ENCODE measurements at regions of chr3 and their contacts with region 1.

Region 1: GRCh38 chr3:138608322-138609135 is at the start of gene FAIM:
- DNase-seq: peak; percentile 85
- ATAC-seq: peak; percentile 74
- H3K4me3 ChIP-seq: peak within 1 kb of the TSS; percentile 57 to 83 (median 71)
- H3K4me3 Mint-ChIP-seq: peak within 1 kb of the TSS; percentile 87
- H3K27ac ChIP-seq: peak within 1 kb of the TSS; percentile 60 to 84
- H3K27ac Mint-ChIP-seq: peak within 1 kb of the TSS; percentile 93
- H3K4me1 ChIP-seq: peaks cover 12 to 14% of the 10 kb centered on the region in 2 donors
- H3K4me1 Mint-ChIP-seq: peaks cover 15% of the 10 kb centered on the region
- H3K27me3 ChIP-seq: no peaks in the 10 kb centered on the region
- H3K27me3 Mint-ChIP-seq: no peaks in the 10 kb centered on the region
- CTCF ChIP-seq: no peak
- total RNA-seq, gene FAIM: 13.8 and 16.3 TPM in 2 replicates

Region 2: DNA sequence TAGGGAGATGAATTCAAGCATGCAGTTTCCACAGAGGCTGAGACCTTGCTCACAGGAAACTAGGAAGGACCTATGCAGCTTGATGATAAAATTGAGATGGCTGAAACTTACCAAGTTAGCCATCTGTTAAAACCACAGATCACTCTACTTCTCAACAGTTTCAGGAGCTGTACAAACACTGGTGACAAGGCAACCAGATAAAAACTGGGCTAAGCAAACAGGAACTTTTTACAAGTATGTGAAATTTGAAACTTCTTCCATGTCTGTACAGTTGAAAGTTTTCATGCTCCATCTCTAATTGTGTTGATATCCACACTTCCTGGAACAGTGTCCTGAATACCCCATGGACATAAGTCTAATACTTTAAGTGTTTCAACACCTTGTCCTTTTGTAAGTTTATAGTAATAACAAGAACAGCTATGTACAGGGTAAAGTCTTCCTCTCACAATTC is 78.3 kb after region 1 on chr3:
- CTCF ChIA-PET with region 1: no interaction called
- POLR2A ChIA-PET with region 1: no interaction called
- intact Hi-C with region 1: loop called (anchors 10 kb)
- DNase-seq: peak; percentile 17
- ATAC-seq: peak; percentile 28
- H3K4me3 ChIP-seq: no peak overlapping the region
- H3K4me3 Mint-ChIP-seq: peak overlapping the region; percentile 50
- H3K27ac ChIP-seq: no peak overlapping the region
- H3K27ac Mint-ChIP-seq: no peak overlapping the region
- H3K4me1 ChIP-seq: peaks cover 19 to 23% of the 10 kb centered on the region in 2 donors
- H3K4me1 Mint-ChIP-seq: peaks cover 23% of the 10 kb centered on the region
- H3K27me3 ChIP-seq: no peaks in the 10 kb centered on the region
- H3K27me3 Mint-ChIP-seq: no peaks in the 10 kb centered on the region
- CTCF ChIP-seq: no peak

Region 3: DNA sequence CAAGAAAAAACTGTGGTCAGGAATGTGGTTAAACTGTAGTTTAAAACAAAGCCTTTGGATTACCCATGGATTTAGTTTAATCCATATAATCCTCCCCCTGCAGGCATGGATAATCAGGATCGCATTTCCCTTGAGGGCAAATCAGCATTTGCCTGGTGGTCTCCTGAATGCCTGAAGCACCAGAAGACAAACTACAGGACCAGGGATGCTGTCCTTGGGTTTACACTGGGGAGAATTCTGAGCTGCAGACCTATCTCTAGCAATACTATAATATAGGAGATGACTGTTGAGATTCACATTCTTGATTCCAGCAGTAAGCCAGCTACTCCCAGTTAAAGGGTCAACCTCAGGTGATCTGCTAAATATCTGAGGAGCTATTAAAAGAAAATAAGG is 215.6 kb after region 1 on chr3:
- CTCF ChIA-PET with region 1: no interaction called
- POLR2A ChIA-PET with region 1: no interaction called
- intact Hi-C with region 1: no loop called
- DNase-seq: no peak
- ATAC-seq: no peak
- H3K4me3 ChIP-seq: no peak overlapping the region
- H3K4me3 Mint-ChIP-seq: no peak overlapping the region
- H3K27ac ChIP-seq: no peak overlapping the region
- H3K27ac Mint-ChIP-seq: no peak overlapping the region
- H3K4me1 ChIP-seq: no peaks in the 10 kb centered on the region
- H3K4me1 Mint-ChIP-seq: no peaks in the 10 kb centered on the region
- H3K27me3 ChIP-seq: no peaks in the 10 kb centered on the region
- H3K27me3 Mint-ChIP-seq: no peaks in the 10 kb centered on the region
- CTCF ChIP-seq: no peak

Region 4: GRCh38 chr3:138834359-138835212 is 226.1 kb after region 1 on chr3 and contains the start of gene PIK3CB:
- CTCF ChIA-PET with region 1: no interaction called
- POLR2A ChIA-PET with region 1: no interaction called
- intact Hi-C with region 1: loop called (anchors 5 kb)
- DNase-seq: peak; percentile 89
- ATAC-seq: peak; percentile 95
- H3K4me3 ChIP-seq: peak within 1 kb of the TSS; percentile 67 to 88 (median 78)
- H3K4me3 Mint-ChIP-seq: peak within 1 kb of the TSS; percentile 92
- H3K27ac ChIP-seq: peak within 1 kb of the TSS; percentile 46 to 84
- H3K27ac Mint-ChIP-seq: peak within 1 kb of the TSS; percentile 95
- H3K4me1 ChIP-seq: peaks cover 14 to 18% of the 10 kb centered on the region in 2 donors
- H3K4me1 Mint-ChIP-seq: peaks cover 23% of the 10 kb centered on the region
- H3K27me3 ChIP-seq: no peaks in the 10 kb centered on the region
- H3K27me3 Mint-ChIP-seq: no peaks in the 10 kb centered on the region
- CTCF ChIP-seq: peak; percentile 31
- total RNA-seq, gene PIK3CB: 29.4 and 35.1 TPM in 2 replicates

Region 5: GRCh38 chr3:139343895-139344856 is 735.6 kb after region 1 on chr3 and contains the start of gene MRPS22:
- CTCF ChIA-PET with region 1: no interaction called
- POLR2A ChIA-PET with region 1: no interaction called
- intact Hi-C with region 1: loop called (anchors 10 kb)
- DNase-seq: peak; percentile 86
- ATAC-seq: peak; percentile 98
- H3K4me3 ChIP-seq: peak within 1 kb of the TSS; percentile 57 to 95 (median 88)
- H3K4me3 Mint-ChIP-seq: no peak within 1 kb of the TSS
- H3K27ac ChIP-seq: peak within 1 kb of the TSS; percentile 51 to 83
- H3K27ac Mint-ChIP-seq: peak within 1 kb of the TSS; percentile 66
- H3K4me1 ChIP-seq: peaks cover 10 to 14% of the 10 kb centered on the region in 2 donors
- H3K4me1 Mint-ChIP-seq: peaks cover 8% of the 10 kb centered on the region
- H3K27me3 ChIP-seq: peaks cover 0 to 13% (median 3%) of the 10 kb centered on the region in 4 experiments
- H3K27me3 Mint-ChIP-seq: peaks cover 17% of the 10 kb centered on the region
- CTCF ChIP-seq: no peak
- total RNA-seq, gene MRPS22: 32.5 and 38.9 TPM in 2 replicates